Heart left ventricle (tissue), 16 donors: ENCODE measurements at regions of chr6 and their contacts with region 1.

Region 1: GRCh38 chr6:82144007-82144851 is 103.3 kb downstream of the IBTK start:
- DNase-seq: peak in 4 of 5 donors; percentile 38 to 69 (median 46)
- ATAC-seq: peak; percentile 80 to 96 (median 88)
- H3K4me3 ChIP-seq: peak overlapping the region in 1 of 12 donors; percentile 5
- H3K27ac ChIP-seq: peak overlapping the region; percentile 60 to 92 (median 77)
- H3K4me1 ChIP-seq: peaks cover 0 to 33% (median 14%) of the 10 kb centered on the region in 12 donors
- H3K27me3 ChIP-seq: no peaks in the 10 kb centered on the region
- CTCF ChIP-seq: no peak
- POLR2A ChIP-seq: no peak

Region 2: GRCh38 chr6:82166493-82166892 is 22.3 kb after region 1 on chr6:
- intact Hi-C with region 1: loop called in 1 of 10 experiments (anchors 1 kb)
- DNase-seq: peak in 3 of 5 donors; percentile 25 to 43 (median 36)
- ATAC-seq: peak; percentile 77 to 94 (median 88)
- H3K4me3 ChIP-seq: no peak overlapping the region
- H3K27ac ChIP-seq: peak overlapping the region; percentile 17 to 84 (median 75)
- H3K4me1 ChIP-seq: peaks cover 0 to 14% (median 0%) of the 10 kb centered on the region in 12 donors
- H3K27me3 ChIP-seq: no peaks in the 10 kb centered on the region
- CTCF ChIP-seq: no peak
- POLR2A ChIP-seq: no peak

Region 3: GRCh38 chr6:82227770-82228169 is 83.5 kb after region 1 on chr6:
- intact Hi-C with region 1: no loop called
- DNase-seq: no peak
- ATAC-seq: no peak
- H3K4me3 ChIP-seq: no peak overlapping the region
- H3K27ac ChIP-seq: no peak overlapping the region
- H3K4me1 ChIP-seq: peaks cover 0 to 11% (median 0%) of the 10 kb centered on the region in 12 donors
- H3K27me3 ChIP-seq: no peaks in the 10 kb centered on the region
- CTCF ChIP-seq: no peak
- POLR2A ChIP-seq: no peak

Region 4: DNA sequence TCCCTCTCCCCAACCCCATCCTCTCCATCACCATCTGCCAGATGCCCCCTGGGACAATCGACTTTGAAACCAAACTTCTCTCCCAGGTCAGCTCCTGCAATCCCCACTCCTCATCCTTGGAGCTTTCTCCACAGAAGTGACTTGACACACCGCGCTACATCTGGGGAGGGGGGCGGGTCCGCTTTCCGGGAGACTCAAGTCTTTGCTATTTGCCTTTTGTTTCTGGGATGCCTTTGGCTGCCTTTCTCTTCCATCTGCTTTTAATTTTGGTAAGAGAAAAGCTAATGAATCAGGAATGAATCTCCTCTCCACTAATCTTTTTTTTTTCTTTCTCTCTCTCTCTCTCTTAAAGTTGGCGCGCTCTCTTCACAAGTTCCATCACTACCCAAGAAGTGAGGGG is 218.6 kb after region 1 on chr6:
- intact Hi-C with region 1: no loop called
- DNase-seq: peak in 2 of 5 donors; percentile 6 to 23
- ATAC-seq: peak in 1 of 4 donors; percentile 11
- H3K4me3 ChIP-seq: peak overlapping the region in 10 of 12 donors; percentile 56 to 76 (median 66)
- H3K27ac ChIP-seq: peak overlapping the region in 1 of 12 donors; percentile 71
- H3K4me1 ChIP-seq: peaks cover 0 to 25% (median 6%) of the 10 kb centered on the region in 12 donors
- H3K27me3 ChIP-seq: peaks cover 0 to 63% (median 17%) of the 10 kb centered on the region in 9 donors
- CTCF ChIP-seq: no peak
- POLR2A ChIP-seq: no peak